ENCODE measurements at regions of chrX and their contacts with region 1.

Region 1: DNA sequence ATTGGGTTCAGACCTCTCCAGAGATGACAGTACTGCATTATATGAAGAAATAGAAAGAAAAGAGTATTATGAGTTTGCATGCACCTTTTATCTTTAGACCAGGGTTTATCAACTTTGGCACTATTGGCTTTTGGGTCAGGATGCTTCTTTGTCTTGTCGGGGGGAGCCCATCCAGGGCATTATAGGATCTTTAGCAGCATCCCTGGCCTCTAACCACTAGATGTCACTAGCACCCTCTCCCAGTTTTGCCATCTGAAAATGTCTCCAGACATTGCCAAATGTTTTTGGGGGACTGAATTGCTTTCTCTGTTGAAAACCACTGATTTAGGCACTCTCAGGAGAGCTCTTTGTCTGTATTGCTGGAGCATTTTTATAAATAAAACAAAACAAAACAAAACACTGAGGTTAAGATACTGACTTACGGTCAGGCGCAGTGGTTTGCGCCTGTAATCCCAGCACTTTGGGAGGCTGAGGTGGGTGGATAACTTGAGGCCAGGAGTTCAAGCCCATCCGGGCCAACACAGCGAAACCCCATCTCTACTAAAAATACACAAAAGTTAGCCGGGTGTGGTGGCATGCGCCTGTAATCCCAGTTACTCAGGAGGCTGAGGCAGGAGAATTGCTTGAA is 23.6 kb downstream of the CA5B start:
- DNase-seq: peak; percentile 55
- H3K4me3 Mint-ChIP-seq: no peak overlapping the region
- H3K27ac Mint-ChIP-seq: peak overlapping the region; percentile 46
- H3K4me1 Mint-ChIP-seq: peaks cover 35% of the 10 kb centered on the region
- H3K27me3 Mint-ChIP-seq: no peaks in the 10 kb centered on the region

Region 2: DNA sequence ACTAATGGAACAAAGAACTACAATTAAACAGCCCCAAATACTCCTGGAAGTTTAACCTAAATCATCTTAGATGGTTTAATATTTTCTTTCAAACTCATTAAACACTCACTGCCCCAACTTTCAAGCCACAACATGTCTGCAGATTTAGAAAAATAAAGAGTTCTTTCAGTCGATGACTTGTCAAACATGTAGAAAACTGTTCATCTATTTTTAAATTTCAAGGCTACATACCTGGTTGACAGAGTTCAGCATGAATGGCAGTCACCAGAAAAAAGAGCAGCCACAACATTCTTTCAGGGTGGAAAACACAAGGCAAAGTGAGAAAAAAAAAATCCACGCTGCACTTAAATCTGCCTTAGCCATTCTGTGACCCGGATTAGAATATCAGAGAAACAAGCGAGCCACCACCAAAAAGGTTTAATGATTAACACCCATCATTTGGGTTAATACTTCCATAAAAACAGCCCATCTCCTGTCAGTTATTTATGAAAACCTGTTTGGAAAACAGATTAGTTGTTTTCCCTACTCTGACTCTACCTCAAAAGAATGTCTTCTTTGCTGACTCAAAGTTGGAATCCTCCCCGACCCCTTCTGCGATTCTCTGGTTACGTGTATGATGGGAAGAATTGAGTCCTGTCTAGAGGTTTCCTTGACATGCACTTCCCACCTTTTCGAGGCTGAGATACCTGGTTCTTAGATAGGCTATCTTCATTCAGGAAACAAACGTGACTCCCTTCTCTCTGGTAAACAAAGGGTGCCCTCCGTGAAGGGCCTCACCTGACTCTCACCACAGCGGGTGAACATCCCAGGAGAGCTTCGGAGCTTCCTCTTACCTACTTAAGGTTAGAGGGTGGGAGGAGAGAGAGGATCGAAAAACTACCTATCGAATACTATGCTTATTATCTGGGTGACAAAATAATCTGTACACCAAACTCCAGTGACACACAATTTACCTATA is 96.9 kb before region 1 on chrX and contains the start of gene CLTRN:
- CTCF ChIA-PET with region 1: no interaction called
- intact Hi-C with region 1: no loop called
- DNase-seq: no peak
- H3K4me3 Mint-ChIP-seq: no peak within 1 kb of the TSS
- H3K27ac Mint-ChIP-seq: no peak within 1 kb of the TSS
- H3K4me1 Mint-ChIP-seq: no peaks in the 10 kb centered on the region
- H3K27me3 Mint-ChIP-seq: peaks cover 7% of the 10 kb centered on the region
- total RNA-seq, gene CLTRN: 0.38 to 0.59 TPM

Region 3: GRCh38 chrX:15815779-15816437 is 54.2 kb after region 1 on chrX:
- CTCF ChIA-PET with region 1: no interaction called
- intact Hi-C with region 1: loop called (anchors 1 kb)
- DNase-seq: peak; percentile 49
- H3K4me3 Mint-ChIP-seq: no peak overlapping the region
- H3K27ac Mint-ChIP-seq: peak overlapping the region; percentile 78
- H3K4me1 Mint-ChIP-seq: peaks cover 40% of the 10 kb centered on the region
- H3K27me3 Mint-ChIP-seq: no peaks in the 10 kb centered on the region

Region 4: GRCh38 chrX:16123222-16123786 is 361.6 kb after region 1 on chrX and contains the start of gene GRPR:
- CTCF ChIA-PET with region 1: no interaction called
- intact Hi-C with region 1: loop called (anchors 5 kb)
- DNase-seq: peak; percentile 73
- H3K4me3 Mint-ChIP-seq: no peak within 1 kb of the TSS
- H3K27ac Mint-ChIP-seq: no peak within 1 kb of the TSS
- H3K4me1 Mint-ChIP-seq: peaks cover 22% of the 10 kb centered on the region
- H3K27me3 Mint-ChIP-seq: peaks cover 4% of the 10 kb centered on the region
- total RNA-seq, gene GRPR: not detected

Region 5: DNA sequence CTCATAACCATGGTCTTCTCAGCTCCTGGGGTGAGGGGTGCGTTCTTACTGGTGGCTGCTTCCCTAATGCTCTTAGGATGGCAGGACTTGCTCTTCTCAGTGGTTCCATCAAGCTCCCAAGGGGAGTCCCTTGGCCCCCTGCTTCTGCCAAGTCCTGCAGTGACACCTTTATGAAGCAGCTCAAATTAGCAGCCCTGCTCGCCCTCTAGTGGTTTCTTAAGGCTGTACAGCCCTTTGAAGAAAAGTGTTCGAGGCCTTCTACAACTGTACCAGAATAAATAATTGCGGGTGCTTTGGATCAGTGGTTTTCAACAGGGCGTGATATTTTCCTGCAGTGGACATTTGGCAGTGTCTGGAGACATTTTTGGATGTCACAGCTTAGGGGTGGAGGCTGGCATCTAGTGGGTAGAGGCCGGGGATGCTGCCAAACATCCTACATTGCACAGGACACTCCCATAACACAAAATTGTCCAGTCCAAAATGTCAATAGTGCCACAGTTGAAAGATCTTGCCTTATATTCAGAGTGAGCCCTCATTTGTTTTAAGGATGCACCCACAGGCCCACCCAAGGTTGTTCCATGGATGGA is 683.6 kb after region 1 on chrX:
- CTCF ChIA-PET with region 1: no interaction called
- intact Hi-C with region 1: loop called (anchors 1 kb)
- DNase-seq: peak; percentile 54
- H3K4me3 Mint-ChIP-seq: no peak overlapping the region
- H3K27ac Mint-ChIP-seq: no peak overlapping the region
- H3K4me1 Mint-ChIP-seq: peaks cover 18% of the 10 kb centered on the region
- H3K27me3 Mint-ChIP-seq: no peaks in the 10 kb centered on the region

Measured in activated naive CD4-positive, alpha-beta T cell treated with anti-CD3 and anti-CD28 coated beads for 36 hours (primary cell).